ENCODE measurements at regions of chr11 and their contacts with region 1.

Region 1: DNA sequence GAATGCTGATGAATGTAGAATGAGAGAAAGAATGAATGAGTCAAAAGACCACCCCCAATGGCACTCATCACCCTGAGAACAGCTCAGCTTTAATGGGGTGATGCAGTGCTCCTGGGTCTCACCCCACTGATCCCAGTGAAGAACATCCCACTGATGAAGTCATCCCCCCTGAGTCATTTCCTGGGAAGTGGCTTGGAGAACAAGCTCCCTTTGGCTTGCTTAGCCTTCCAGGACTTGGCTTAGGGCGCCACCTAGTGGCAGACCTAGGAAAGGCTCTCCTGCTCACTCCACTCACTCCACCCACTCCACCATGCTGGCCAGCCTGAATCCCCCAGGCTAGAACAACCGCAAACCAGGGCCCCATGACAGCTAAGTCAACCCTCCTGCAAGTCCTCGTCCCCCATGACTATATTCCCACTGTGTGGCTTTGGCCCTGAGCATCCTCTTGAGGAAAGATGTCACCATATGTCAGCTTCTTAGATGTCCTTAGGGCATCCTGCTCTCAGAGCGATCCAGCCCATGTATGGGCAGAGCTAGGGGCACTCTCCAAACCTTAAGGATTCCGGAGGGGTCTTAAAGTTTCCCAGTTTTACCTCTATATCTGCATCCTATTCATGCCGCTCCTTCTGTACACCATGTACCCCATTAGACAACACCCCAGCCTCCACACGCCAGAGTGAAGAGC is 17.8 kb upstream of the TMPRSS13 start:
- DNase-seq: peak; percentile 54
- H3K4me3 ChIP-seq: no peak overlapping the region
- CTCF ChIP-seq: peak; percentile 92

Region 2: DNA sequence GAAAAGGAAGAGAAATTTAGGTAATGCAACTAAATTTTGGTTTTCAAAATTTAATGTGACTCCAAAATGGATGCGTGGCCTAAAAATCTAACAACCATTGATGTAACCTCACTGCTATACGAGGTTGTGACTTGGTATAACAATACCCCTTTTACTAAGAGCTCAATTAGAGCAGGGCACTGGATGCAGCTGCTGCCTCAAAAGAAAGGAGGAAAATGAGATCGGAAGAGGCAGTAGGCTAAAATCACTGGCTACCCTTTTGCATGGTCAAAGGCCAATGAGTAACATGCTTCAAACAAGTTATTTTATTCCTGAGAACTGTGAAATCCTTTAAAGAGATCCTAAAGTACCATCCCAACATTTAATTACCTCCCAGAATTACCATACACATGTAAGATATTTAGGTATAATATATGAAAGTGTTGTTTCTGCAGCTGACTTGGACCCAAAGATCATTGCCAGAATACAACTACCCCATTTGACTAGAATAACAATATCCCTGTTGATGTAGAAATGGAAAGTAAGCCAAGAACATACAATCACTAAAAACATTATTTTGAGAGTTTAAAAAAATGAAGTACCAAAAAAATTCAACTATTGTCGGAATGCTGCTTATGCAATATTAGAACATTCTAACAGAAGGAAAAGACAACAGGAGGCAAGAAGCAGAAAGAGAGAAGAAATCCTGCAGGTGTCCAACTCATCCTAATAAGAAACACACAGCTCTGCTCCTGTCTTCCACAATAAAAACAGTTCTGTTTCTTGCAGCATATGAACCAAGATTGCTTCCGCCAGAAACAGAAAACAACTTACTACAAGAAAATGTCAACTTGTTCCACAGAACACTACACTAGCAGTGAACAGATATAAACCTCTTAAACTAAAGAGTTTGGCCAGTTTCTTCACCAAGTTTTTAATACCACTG is 863.7 kb before region 1 on chr11:
- CTCF ChIA-PET with region 1: no interaction called
- POLR2A ChIA-PET with region 1: no interaction called
- DNase-seq: no peak
- H3K4me3 ChIP-seq: no peak overlapping the region
- CTCF ChIP-seq: no peak

Region 3: GRCh38 chr11:117807482-117808327 is 139.3 kb before region 1 on chr11:
- CTCF ChIA-PET with region 1: interaction called, 144 read pairs
- POLR2A ChIA-PET with region 1: no interaction called
- DNase-seq: no peak
- H3K4me3 ChIP-seq: no peak overlapping the region
- CTCF ChIP-seq: peak; percentile 82

Region 4: DNA sequence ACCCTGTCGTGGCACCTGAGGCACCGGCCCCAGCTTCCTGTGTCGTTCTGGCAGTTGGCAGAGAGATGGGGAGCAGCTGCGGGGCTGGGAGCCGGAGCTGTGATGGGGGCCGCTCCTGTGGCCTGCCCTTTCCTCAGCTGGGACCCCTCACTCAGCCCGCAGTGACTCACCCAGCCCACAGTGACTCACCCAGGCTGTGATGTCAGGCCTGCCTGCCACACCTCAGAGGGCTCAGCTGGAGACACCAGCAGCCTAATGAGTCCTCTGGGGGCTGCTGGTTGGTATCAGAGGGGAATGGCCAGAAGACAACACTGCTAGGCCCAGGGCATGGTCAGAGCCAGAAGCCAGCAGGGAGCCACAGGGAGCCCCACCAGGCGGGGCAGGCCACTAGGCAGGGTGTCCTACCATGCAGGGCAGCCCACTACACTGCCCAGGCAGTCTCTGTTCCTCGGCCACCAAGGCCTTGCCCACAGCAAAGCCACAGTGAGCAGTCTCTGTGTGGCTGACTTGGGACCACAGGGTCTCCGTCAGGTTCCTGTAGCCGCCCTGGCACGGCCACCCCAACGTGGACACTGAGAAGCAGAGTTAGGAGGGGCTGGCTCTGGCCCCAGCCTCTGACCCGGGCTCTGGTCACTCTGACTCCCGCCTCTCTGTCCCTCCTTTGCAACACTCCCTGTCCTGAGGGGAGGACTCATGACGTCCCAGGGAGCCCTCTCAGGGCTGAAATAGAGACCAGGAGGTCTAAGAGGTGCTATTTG is 118.2 kb before region 1 on chr11:
- CTCF ChIA-PET with region 1: interaction called, 243 read pairs
- POLR2A ChIA-PET with region 1: no interaction called
- DNase-seq: no peak
- H3K4me3 ChIP-seq: no peak overlapping the region
- CTCF ChIP-seq: no peak

Region 5: DNA sequence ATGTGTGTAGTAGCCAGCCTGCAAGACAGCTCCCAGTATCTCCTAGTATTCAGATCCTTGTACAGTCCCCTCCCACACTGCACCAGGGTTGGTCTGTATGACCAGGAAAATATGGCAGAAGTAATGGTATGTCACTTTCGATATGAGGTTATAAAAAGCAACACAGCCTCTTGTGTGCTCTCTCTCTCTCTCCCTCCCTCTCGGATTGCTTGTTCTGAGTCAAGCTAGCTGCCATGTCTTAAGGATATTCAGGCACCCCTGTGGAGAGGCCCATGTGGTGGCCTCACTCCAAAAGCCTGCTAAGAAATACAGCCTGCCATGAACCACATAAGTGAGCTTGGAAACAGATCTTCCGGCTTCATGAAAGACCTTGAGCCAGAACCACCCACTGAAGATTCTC is 95.9 kb before region 1 on chr11:
- CTCF ChIA-PET with region 1: interaction called, 341 read pairs
- POLR2A ChIA-PET with region 1: interaction called, 3 read pairs
- DNase-seq: no peak
- H3K4me3 ChIP-seq: no peak overlapping the region
- CTCF ChIP-seq: no peak

Region 6: DNA sequence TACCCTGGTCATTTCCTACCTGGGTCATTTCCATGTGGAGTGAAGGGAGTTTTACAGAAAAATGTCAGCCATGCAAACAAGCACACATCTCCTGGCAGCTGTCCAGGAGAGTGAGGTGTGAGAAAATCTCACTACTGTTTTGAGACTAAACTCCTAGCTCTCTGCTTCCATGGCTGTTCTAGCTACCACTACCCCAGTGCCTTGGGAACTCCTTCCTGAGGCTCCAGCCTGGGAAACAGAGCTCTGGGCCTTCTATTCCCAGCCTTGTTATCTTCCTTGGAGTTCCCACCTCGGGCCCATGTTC is 15.0 kb before region 1 on chr11:
- CTCF ChIA-PET with region 1: interaction called, 34 read pairs
- POLR2A ChIA-PET with region 1: no interaction called
- DNase-seq: no peak
- H3K4me3 ChIP-seq: no peak overlapping the region
- CTCF ChIP-seq: no peak

Region 7: GRCh38 chr11:117976445-117976844 is 29.5 kb after region 1 on chr11:
- CTCF ChIA-PET with region 1: no interaction called
- POLR2A ChIA-PET with region 1: no interaction called
- DNase-seq: no peak
- H3K4me3 ChIP-seq: no peak overlapping the region
- CTCF ChIP-seq: no peak

Region 8: GRCh38 chr11:118128721-118129470 is 181.9 kb after region 1 on chr11:
- CTCF ChIA-PET with region 1: no interaction called
- POLR2A ChIA-PET with region 1: no interaction called
- DNase-seq: no peak
- H3K4me3 ChIP-seq: no peak overlapping the region
- CTCF ChIP-seq: no peak

Region 9: GRCh38 chr11:119572481-119573424 is 1625.8 kb after region 1 on chr11:
- CTCF ChIA-PET with region 1: no interaction called
- POLR2A ChIA-PET with region 1: no interaction called
- DNase-seq: no peak
- H3K4me3 ChIP-seq: no peak overlapping the region
- CTCF ChIP-seq: no peak

Measured in AG04449 (cell line).